Panc1 (cell line): ENCODE measurements at regions of chr20 and their contacts with region 1.

Region 1: GRCh38 chr20:13105864-13106457 is 97.2 kb downstream of the SPTLC3 start:
- DNase-seq: no peak
- ATAC-seq: no peak
- H3K4me3 ChIP-seq: no peak overlapping the region
- H3K27ac ChIP-seq: no peak overlapping the region
- H3K4me1 ChIP-seq: no peaks in the 10 kb centered on the region
- H3K27me3 ChIP-seq: peaks cover 5% of the 10 kb centered on the region; the same call in 1 of the 2 replicates
- CTCF ChIP-seq: peak; percentile 67; the same call in 1 of the 2 replicates

Region 2: GRCh38 chr20:11573507-11573906 is 1532.5 kb before region 1 on chr20:
- CTCF ChIA-PET with region 1: no interaction called
- POLR2A ChIA-PET with region 1: no interaction called
- in situ Hi-C with region 1: no loop called
- intact Hi-C with region 1: loop called (anchors 10 kb)
- DNase-seq: no peak
- ATAC-seq: no peak
- H3K4me3 ChIP-seq: no peak overlapping the region
- H3K27ac ChIP-seq: no peak overlapping the region
- H3K4me1 ChIP-seq: no peaks in the 10 kb centered on the region
- H3K27me3 ChIP-seq: 0 out of 2 replicates have a peak, but pooled peaks cover 2% of the 10 kb centered on the region
- CTCF ChIP-seq: no peak

Region 3: GRCh38 chr20:12638633-12639312 is 467.2 kb before region 1 on chr20:
- CTCF ChIA-PET with region 1: no interaction called
- POLR2A ChIA-PET with region 1: no interaction called
- in situ Hi-C with region 1: no loop called
- intact Hi-C with region 1: no loop called
- DNase-seq: no peak
- ATAC-seq: no peak
- H3K4me3 ChIP-seq: no peak overlapping the region
- H3K27ac ChIP-seq: no peak overlapping the region
- H3K4me1 ChIP-seq: no peaks in the 10 kb centered on the region
- H3K27me3 ChIP-seq: no peaks in the 10 kb centered on the region
- CTCF ChIP-seq: no peak

Region 4: GRCh38 chr20:12925214-12925755 is 180.7 kb before region 1 on chr20:
- CTCF ChIA-PET with region 1: interaction called, 4 read pairs
- POLR2A ChIA-PET with region 1: no interaction called
- in situ Hi-C with region 1: no loop called
- intact Hi-C with region 1: loop called (anchors 2 kb)
- DNase-seq: peak; percentile 41
- ATAC-seq: peak; percentile 85
- H3K4me3 ChIP-seq: peak overlapping the region in 1 of 2 experiments; percentile 35; a peak in 2 of 4 replicates
- H3K27ac ChIP-seq: no peak overlapping the region
- H3K4me1 ChIP-seq: no peaks in the 10 kb centered on the region
- H3K27me3 ChIP-seq: no peaks in the 10 kb centered on the region
- CTCF ChIP-seq: peak; percentile 79

Region 5: GRCh38 chr20:12970372-12970821 is 135.6 kb before region 1 on chr20:
- CTCF ChIA-PET with region 1: no interaction called
- POLR2A ChIA-PET with region 1: no interaction called
- in situ Hi-C with region 1: no loop called
- intact Hi-C with region 1: loop called (anchors 2 kb)
- DNase-seq: peak; percentile 13
- ATAC-seq: no peak
- H3K4me3 ChIP-seq: no peak overlapping the region
- H3K27ac ChIP-seq: no peak overlapping the region
- H3K4me1 ChIP-seq: no peaks in the 10 kb centered on the region
- H3K27me3 ChIP-seq: no peaks in the 10 kb centered on the region
- CTCF ChIP-seq: peak; percentile 53; the same call in 1 of the 2 replicates